ENCODE measurements at regions of chr11 and their contacts with region 1.

Region 1: DNA sequence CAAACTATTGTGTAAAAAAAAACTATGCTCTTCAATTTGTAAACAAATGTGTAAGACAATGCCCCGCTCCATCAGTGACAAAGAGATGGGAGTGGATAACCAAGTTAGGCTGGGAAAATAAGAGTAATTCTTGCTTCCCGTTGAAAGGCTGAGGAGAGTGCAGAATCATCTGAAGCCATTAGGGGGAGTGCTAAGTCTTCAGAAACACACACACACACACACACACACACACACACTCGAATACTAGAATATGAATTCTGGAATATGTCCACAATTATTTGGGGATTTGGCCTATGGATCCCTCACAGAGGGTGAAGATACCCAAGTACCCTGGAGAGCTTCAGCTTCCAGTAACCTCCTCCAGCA is 27.8 kb upstream of the ROBO3 start:
- DNase-seq: peak in 2 of 9 experiments; percentile 19 to 45
- ATAC-seq: peak; percentile 45
- H3K4me3 ChIP-seq: no peak overlapping the region
- H3K4me3 Mint-ChIP-seq: no peak overlapping the region
- H3K27ac ChIP-seq: no peak overlapping the region
- H3K27ac Mint-ChIP-seq: no peak overlapping the region
- H3K4me1 ChIP-seq: peaks cover 7% of the 10 kb centered on the region
- H3K4me1 Mint-ChIP-seq: peaks cover 17% of the 10 kb centered on the region
- H3K27me3 ChIP-seq: peaks cover 11 to 14% of the 10 kb centered on the region in 2 experiments
- H3K27me3 Mint-ChIP-seq: peaks cover 56% of the 10 kb centered on the region
- CTCF ChIP-seq: no peak

Region 2: GRCh38 chr11:124415356-124415923 is 422.0 kb before region 1 on chr11:
- CTCF ChIA-PET with region 1: interaction called, 3 read pairs
- POLR2A ChIA-PET with region 1: no interaction called
- intact Hi-C with region 1: loop called (anchors 2 kb)
- DNase-seq: peak in 2 of 9 experiments; percentile 30 to 34
- ATAC-seq: no peak
- H3K4me3 ChIP-seq: no peak overlapping the region
- H3K4me3 Mint-ChIP-seq: no peak overlapping the region
- H3K27ac ChIP-seq: no peak overlapping the region
- H3K27ac Mint-ChIP-seq: no peak overlapping the region
- H3K4me1 ChIP-seq: no peaks in the 10 kb centered on the region
- H3K4me1 Mint-ChIP-seq: no peaks in the 10 kb centered on the region
- H3K27me3 ChIP-seq: peaks cover 0 to 6% of the 10 kb centered on the region in 2 experiments
- H3K27me3 Mint-ChIP-seq: peaks cover 8% of the 10 kb centered on the region
- CTCF ChIP-seq: peak; percentile 83

Region 3: DNA sequence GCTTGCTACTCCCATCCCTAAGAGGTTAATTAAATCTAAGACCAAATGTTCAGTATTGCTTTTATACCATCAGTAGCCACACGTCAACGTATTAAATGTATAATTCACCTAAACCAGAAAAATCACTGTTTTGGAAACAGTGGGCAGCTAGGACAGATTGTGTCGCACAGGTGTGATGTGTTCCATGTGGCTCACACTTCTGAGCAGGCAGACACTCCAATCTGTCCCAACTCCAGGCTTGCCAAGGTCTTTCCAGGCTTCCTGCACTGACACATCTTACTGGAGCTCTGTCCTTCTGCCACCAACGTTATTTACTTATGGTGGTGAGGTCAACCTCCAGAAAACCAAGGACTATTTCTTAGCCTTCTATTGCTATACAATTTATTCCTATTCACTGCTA is 175.4 kb before region 1 on chr11:
- CTCF ChIA-PET with region 1: interaction called, 99 read pairs
- POLR2A ChIA-PET with region 1: no interaction called
- intact Hi-C with region 1: no loop called
- DNase-seq: no peak
- ATAC-seq: no peak
- H3K4me3 ChIP-seq: no peak overlapping the region
- H3K4me3 Mint-ChIP-seq: no peak overlapping the region
- H3K27ac ChIP-seq: no peak overlapping the region
- H3K27ac Mint-ChIP-seq: no peak overlapping the region
- H3K4me1 ChIP-seq: no peaks in the 10 kb centered on the region
- H3K4me1 Mint-ChIP-seq: no peaks in the 10 kb centered on the region
- H3K27me3 ChIP-seq: no peaks in the 10 kb centered on the region
- H3K27me3 Mint-ChIP-seq: no peaks in the 10 kb centered on the region
- CTCF ChIP-seq: no peak

Region 4: GRCh38 chr11:124758317-124759203 is 78.9 kb before region 1 on chr11:
- CTCF ChIA-PET with region 1: interaction called, 8 read pairs
- POLR2A ChIA-PET with region 1: no interaction called
- intact Hi-C with region 1: loop called (anchors 1 kb)
- DNase-seq: peak; percentile 42 to 78 (median 70)
- ATAC-seq: peak; percentile 72
- H3K4me3 ChIP-seq: peak overlapping the region; percentile 6 to 16
- H3K4me3 Mint-ChIP-seq: peak overlapping the region; percentile 58
- H3K27ac ChIP-seq: no peak overlapping the region
- H3K27ac Mint-ChIP-seq: no peak overlapping the region
- H3K4me1 ChIP-seq: peaks cover 34% of the 10 kb centered on the region
- H3K4me1 Mint-ChIP-seq: peaks cover 33% of the 10 kb centered on the region
- H3K27me3 ChIP-seq: peaks cover 32 to 39% of the 10 kb centered on the region in 2 experiments
- H3K27me3 Mint-ChIP-seq: peaks cover 40% of the 10 kb centered on the region
- CTCF ChIP-seq: peak; percentile 81

Region 5: GRCh38 chr11:124800226-124800929 is 37.1 kb before region 1 on chr11 and contains the start of gene MSANTD2:
- CTCF ChIA-PET with region 1: interaction called, 16 read pairs
- POLR2A ChIA-PET with region 1: interaction called, 4 read pairs
- intact Hi-C with region 1: loop called in 1 of 2 experiments (anchors 2 kb)
- DNase-seq: peak; percentile 57 to 88 (median 80)
- ATAC-seq: peak; percentile 76
- H3K4me3 ChIP-seq: peak within 1 kb of the TSS; percentile 72 to 84
- H3K4me3 Mint-ChIP-seq: peak within 1 kb of the TSS; percentile 96
- H3K27ac ChIP-seq: peak within 1 kb of the TSS; percentile 91 to 98
- H3K27ac Mint-ChIP-seq: peak within 1 kb of the TSS; percentile 96
- H3K4me1 ChIP-seq: peaks cover 17% of the 10 kb centered on the region
- H3K4me1 Mint-ChIP-seq: peaks cover 32% of the 10 kb centered on the region
- H3K27me3 ChIP-seq: no peaks in the 10 kb centered on the region
- H3K27me3 Mint-ChIP-seq: no peaks in the 10 kb centered on the region
- CTCF ChIP-seq: no peak
- total RNA-seq, gene MSANTD2: 4.3 to 4.5 TPM

Region 6: DNA sequence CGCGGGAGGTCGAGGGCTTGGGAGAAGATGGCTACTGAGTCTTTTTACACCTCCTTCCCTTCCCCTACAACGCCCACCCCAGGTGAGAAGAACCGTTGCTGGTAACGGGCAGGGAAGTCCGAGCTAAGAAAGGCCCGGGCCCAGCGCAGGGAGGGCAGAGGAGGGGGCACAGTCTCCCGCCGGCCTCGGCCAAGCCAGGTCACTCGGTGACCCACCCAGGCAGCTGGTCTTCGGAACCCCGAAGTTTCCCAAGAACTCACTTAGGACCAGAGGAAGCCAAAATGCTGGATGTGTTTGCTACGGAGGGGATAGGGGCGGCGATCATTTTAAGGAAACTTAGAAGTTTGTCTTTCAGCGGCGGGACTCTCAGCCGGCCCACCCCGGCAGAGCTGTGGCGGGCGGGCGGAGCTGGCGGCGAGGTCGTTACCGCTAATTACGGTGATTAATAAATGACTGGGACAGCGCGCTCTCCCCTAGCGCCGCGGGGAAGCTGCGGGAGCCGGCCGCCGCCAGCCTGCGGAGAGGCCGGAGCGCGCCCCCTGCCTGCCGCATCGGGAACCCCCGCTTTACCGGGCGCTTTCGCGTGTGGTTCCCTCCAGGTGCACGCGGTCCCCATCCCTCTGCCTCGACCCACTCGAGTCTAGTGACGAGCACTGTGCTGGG is 28.6 kb after region 1 on chr11:
- CTCF ChIA-PET with region 1: interaction called, 13 read pairs
- POLR2A ChIA-PET with region 1: no interaction called
- intact Hi-C with region 1: no loop called
- DNase-seq: peak in 8 of 9 experiments; percentile 26 to 67 (median 54)
- ATAC-seq: peak; percentile 66
- H3K4me3 ChIP-seq: peak overlapping the region; percentile 8 to 33
- H3K4me3 Mint-ChIP-seq: peak overlapping the region; percentile 12
- H3K27ac ChIP-seq: no peak overlapping the region
- H3K27ac Mint-ChIP-seq: no peak overlapping the region
- H3K4me1 ChIP-seq: peaks cover 47% of the 10 kb centered on the region
- H3K4me1 Mint-ChIP-seq: peaks cover 43% of the 10 kb centered on the region
- H3K27me3 ChIP-seq: peaks cover 56 to 62% of the 10 kb centered on the region in 2 experiments
- H3K27me3 Mint-ChIP-seq: peaks cover 86% of the 10 kb centered on the region
- CTCF ChIP-seq: peak; percentile 72

Region 7: DNA sequence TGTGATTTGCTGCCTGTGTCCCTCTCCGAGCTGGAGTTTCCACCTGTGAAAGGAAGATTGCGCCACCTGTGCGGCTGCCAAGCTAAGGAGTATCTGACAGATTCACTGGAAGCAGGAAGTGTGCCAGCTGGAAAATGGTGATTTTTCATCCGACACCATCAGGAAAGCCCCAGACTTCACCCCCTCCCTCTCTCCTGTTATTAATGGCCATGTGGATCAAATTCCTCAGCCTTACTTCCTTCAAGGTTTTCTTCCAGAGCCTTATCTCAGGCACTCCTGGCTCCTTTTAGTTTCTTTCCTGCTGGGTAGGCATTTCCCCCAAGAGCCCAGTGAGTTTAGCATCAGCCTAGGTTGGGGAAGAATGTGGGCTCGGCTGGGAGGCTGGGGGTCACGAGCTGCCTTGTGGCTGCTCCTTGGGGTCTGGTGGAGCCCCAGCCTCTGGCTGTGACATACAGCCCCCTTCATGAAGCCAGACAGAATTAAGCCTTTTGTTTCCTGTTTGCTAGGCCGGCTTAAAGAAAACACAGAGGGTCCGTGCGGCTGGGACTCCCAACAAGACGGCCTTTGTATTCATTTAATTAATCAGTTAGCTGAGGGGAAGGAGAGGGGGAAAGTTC is 364.2 kb after region 1 on chr11:
- CTCF ChIA-PET with region 1: no interaction called
- POLR2A ChIA-PET with region 1: no interaction called
- intact Hi-C with region 1: no loop called
- DNase-seq: no peak
- ATAC-seq: no peak
- H3K4me3 ChIP-seq: no peak overlapping the region
- H3K4me3 Mint-ChIP-seq: no peak overlapping the region
- H3K27ac ChIP-seq: no peak overlapping the region
- H3K27ac Mint-ChIP-seq: no peak overlapping the region
- H3K4me1 ChIP-seq: no peaks in the 10 kb centered on the region
- H3K4me1 Mint-ChIP-seq: no peaks in the 10 kb centered on the region
- H3K27me3 ChIP-seq: peaks cover 0 to 2% of the 10 kb centered on the region in 2 experiments
- H3K27me3 Mint-ChIP-seq: peaks cover 36% of the 10 kb centered on the region
- CTCF ChIP-seq: no peak